ENCODE measurements at regions of chr17 and their contacts with region 1.

Region 1: DNA sequence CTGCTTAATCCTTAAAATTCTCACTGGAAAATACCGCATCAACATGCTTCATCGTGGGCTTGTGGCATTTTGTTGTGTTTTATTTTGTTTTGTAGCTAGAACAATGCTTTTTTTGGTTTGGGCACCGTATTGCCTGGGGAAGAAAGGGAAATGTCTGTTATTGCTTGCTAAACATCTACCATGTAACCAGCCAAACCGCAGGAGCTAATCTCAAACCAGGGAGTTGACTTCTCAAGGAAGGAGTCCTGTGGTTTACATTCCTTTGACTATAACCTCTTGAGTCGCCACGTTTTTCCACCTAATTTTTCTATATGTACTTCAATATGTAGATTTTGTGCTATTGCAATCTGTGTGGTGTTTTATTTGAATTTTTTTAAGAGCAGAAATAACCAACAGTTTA is 593.5 kb upstream of the SOX9 start:
- DNase-seq: no peak
- H3K4me3 ChIP-seq: no peak overlapping the region
- H3K27ac ChIP-seq: no peak overlapping the region
- H3K4me1 ChIP-seq: no peaks in the 10 kb centered on the region
- H3K27me3 ChIP-seq: no peaks in the 10 kb centered on the region
- CTCF ChIP-seq: no peak

Region 2: GRCh38 chr17:71460943-71461342 is 66.4 kb before region 1 on chr17:
- intact Hi-C with region 1: loop called (anchors 10 kb)
- DNase-seq: no peak
- H3K4me3 ChIP-seq: no peak overlapping the region
- H3K27ac ChIP-seq: no peak overlapping the region
- H3K4me1 ChIP-seq: no peaks in the 10 kb centered on the region
- H3K27me3 ChIP-seq: no peaks in the 10 kb centered on the region
- CTCF ChIP-seq: no peak